ENCODE measurements at regions of chr4 and their contacts with region 1.

Region 1: GRCh38 chr4:82373816-82374625 is at the start of gene HNRNPD:
- DNase-seq: peak; percentile 100
- ATAC-seq: peak; percentile 89
- H3K4me3 ChIP-seq: peak within 1 kb of the TSS; percentile 78 to 84
- H3K27ac ChIP-seq: peak within 1 kb of the TSS; percentile 99
- H3K4me1 ChIP-seq: peaks cover 11 to 26% of the 10 kb centered on the region in 2 experiments
- H3K27me3 ChIP-seq: no peaks in the 10 kb centered on the region
- CTCF ChIP-seq: no peak
- POLR2A ChIP-seq: peak; percentile 59
- RAD21 ChIP-seq: no peak
- total RNA-seq, gene HNRNPD: 357 TPM

Region 2: DNA sequence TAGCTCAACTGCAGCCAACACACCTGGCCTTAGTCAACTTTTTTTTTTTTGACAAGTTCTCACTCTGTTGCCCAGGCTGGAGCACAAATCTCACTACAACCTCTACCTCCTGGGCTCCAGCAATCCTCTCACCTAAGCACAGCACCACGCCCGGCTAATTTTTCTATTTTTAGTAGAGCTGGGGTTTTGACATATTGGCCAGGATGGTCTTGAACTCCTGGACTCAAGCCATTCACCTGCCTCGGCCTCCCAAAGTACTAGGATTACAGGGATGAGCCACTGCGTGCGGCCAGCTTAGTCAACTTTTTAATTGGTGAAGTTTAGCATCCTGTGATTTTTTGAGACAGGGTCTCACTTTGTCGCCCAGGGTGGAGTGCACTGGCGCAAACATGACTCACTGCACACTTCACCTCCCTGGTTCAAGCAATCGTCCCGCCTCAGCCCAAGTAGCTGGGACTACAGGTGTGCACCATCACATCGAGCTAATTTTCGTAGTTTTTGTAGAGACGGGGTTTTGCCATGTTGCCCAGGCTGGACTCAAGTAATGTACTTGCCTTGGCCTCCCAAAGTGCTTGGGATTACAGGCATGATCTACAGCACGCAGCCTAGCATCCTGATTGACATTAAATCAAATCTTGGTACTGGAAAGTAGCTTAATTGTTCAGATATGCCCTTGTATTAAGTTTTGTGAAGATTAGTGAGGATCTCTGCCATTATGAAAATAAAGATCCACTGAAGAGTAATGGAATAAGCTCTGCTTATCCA is 48.0 kb after region 1 on chr4:
- CTCF ChIA-PET with region 1: no interaction called
- POLR2A ChIA-PET with region 1: interaction called, 11 read pairs
- RAD21 ChIA-PET with region 1: no interaction called
- intact Hi-C with region 1: loop called (anchors 2 kb)
- DNase-seq: no peak
- ATAC-seq: peak; percentile 41
- H3K4me3 ChIP-seq: no peak overlapping the region
- H3K27ac ChIP-seq: no peak overlapping the region
- H3K4me1 ChIP-seq: peaks cover 0 to 22% of the 10 kb centered on the region in 2 experiments; a peak in 3 of 4 replicates
- H3K27me3 ChIP-seq: no peaks in the 10 kb centered on the region
- CTCF ChIP-seq: no peak
- POLR2A ChIP-seq: no peak
- RAD21 ChIP-seq: no peak

Region 3: GRCh38 chr4:82798168-82799005 is 424.4 kb after region 1 on chr4 and contains the start of gene SCD5:
- CTCF ChIA-PET with region 1: no interaction called
- POLR2A ChIA-PET with region 1: no interaction called
- RAD21 ChIA-PET with region 1: no interaction called
- intact Hi-C with region 1: loop called (anchors 5 kb)
- DNase-seq: peak; percentile 55
- ATAC-seq: peak; percentile 94
- H3K4me3 ChIP-seq: peak within 1 kb of the TSS; percentile 64 to 80
- H3K27ac ChIP-seq: peak within 1 kb of the TSS; percentile 15; the same call in 1 of the 2 replicates
- H3K4me1 ChIP-seq: peaks cover 13 to 25% of the 10 kb centered on the region in 2 experiments; a peak in 3 of 4 replicates
- H3K27me3 ChIP-seq: no peaks in the 10 kb centered on the region
- CTCF ChIP-seq: no peak
- POLR2A ChIP-seq: no peak
- RAD21 ChIP-seq: no peak
- total RNA-seq, gene SCD5: 21.7 TPM

Measured in HCT116 (cell line).